Activated naive CD4-positive, alpha-beta T cell treated with anti-CD3 and anti-CD28 coated beads for 36 hours (primary cell): ENCODE measurements at regions of chr10 and their contacts with region 1.

Region 1: DNA sequence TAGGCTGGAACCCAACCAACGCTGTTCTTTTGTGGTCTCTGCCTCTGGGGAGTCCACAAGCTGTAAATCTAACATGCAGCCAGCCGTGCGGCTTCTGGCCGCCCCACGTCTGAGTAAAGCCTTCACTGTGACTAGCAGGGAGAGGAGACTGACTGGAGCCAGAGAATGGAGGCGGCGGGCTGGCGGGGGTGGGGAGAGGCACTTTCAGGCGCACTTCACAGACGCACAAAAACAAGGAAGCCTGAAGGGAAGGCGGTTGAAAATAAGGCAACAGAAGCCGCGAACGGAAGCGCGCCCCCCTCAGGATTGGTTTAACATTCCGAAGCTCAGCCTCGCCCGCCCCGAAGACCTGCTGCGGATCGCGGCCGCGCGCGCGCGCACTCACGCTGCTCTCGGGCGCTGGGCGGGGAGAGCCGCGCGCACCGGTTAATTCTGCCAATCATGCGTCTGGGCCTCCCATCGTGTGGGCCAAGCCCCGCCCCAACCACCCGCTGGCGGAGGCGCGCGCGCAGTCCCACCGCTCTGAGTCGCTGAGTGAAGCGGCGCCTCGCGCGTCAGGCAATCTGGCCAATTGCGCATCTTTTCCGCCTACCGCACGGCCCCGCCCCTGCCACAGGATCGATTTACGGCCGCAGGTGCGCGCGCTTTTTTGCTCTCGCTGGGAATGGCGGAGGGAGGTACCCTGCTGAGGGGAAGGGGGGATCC is at the start of gene SFR1:
- DNase-seq: peak; percentile 99
- H3K4me3 Mint-ChIP-seq: peak within 1 kb of the TSS; percentile 90
- H3K27ac Mint-ChIP-seq: peak within 1 kb of the TSS; percentile 97
- H3K4me1 Mint-ChIP-seq: peaks cover 38% of the 10 kb centered on the region
- H3K27me3 Mint-ChIP-seq: no peaks in the 10 kb centered on the region
- total RNA-seq, gene SFR1: 17.0 to 18.5 TPM

Region 2: DNA sequence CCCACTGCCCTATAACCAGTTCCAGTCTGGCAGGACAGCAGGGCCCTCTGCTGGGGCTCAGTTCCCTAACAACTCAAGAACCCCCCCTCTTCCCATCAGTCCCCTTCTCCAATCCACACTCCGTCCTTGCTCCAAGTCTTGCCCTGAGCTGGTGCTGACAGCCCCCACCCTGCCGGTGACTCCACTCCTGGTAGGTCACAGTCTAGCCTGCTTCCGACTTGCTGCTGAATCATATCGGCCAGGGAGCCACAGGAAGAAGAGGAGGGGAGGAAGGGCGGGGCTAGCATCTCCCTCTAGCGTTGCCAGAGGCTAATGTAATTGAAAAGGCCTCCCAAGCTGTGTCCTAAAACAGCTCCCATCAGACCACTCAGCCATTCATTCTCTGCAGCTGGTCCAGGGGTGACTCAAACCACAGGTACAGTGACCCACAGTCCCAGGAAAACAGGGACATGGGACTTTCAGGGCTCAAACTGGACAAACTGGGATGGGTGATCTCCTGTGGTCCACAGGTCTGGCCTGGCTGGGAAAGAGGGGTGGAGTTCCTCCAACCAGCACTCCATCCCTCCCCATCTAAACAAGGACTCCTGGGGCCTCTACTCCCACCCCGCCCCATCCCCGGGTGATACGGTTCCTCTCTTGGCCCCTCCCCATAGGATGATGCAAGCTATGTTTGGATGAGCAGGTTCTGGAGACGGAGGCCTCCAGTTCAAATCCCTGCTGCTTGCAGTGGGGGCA is 425.1 kb before region 1 on chr10:
- CTCF ChIA-PET with region 1: no interaction called
- intact Hi-C with region 1: loop called (anchors 5 kb)
- DNase-seq: peak; percentile 92
- H3K4me3 Mint-ChIP-seq: peak overlapping the region; percentile 28
- H3K27ac Mint-ChIP-seq: no peak overlapping the region
- H3K4me1 Mint-ChIP-seq: peaks cover 22% of the 10 kb centered on the region
- H3K27me3 Mint-ChIP-seq: no peaks in the 10 kb centered on the region

Region 3: DNA sequence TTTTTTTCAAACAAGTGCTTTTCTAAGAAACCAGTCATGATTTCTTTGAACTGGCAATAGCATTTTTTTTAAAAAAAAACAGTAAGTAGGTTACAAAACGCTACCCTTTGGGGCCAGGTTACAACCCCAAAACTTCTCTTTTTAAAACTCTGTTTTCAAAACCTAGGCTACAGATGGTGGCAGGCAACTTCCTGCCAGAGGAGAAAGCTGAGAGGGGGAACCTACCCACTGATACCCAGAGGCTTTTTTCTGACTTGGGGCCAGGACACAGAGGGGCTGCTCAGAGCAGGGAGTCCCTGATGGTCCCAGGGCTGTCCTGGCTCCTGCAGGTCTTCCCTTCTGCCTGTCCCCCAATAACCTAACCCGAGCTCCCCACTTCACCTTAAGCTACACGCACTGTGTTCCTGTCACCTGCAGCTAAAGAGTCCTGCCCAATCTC is 210.6 kb before region 1 on chr10:
- CTCF ChIA-PET with region 1: interaction called, 3 read pairs
- intact Hi-C with region 1: loop called (anchors 2 kb)
- DNase-seq: peak; percentile 57
- H3K4me3 Mint-ChIP-seq: peak overlapping the region; percentile 60
- H3K27ac Mint-ChIP-seq: peak overlapping the region; percentile 94
- H3K4me1 Mint-ChIP-seq: peaks cover 72% of the 10 kb centered on the region
- H3K27me3 Mint-ChIP-seq: no peaks in the 10 kb centered on the region

Region 4: DNA sequence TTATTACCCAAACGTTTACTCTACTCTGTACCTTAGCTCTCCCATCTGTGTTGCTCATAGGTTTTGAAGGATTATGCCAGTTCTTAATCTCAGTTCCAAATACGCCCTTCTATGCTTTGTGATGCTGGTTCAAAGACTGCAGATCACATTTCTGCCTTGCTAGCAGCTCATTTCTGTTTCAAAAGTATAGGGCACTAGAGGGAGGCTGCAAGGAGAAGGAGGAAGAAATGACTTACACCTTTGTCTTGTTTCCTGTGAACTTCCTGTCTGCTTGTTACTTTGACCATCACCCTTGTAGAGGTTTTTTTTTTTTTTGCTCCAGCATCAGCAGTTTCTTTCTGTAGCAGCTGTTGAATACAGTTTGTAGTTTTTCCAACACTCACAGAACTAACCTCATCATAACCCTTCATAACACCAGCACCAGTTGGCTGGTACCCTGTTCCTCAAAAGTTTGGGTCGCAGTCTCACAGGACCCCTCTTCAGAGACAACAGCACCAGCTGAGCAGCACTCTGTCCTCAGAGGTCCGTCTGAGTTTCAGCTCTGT is 138.2 kb before region 1 on chr10:
- CTCF ChIA-PET with region 1: interaction called, 6 read pairs
- intact Hi-C with region 1: loop called (anchors 1 kb)
- DNase-seq: peak; percentile 26
- H3K4me3 Mint-ChIP-seq: peak overlapping the region; percentile 7
- H3K27ac Mint-ChIP-seq: peak overlapping the region; percentile 72
- H3K4me1 Mint-ChIP-seq: peaks cover 59% of the 10 kb centered on the region
- H3K27me3 Mint-ChIP-seq: no peaks in the 10 kb centered on the region

Region 5: DNA sequence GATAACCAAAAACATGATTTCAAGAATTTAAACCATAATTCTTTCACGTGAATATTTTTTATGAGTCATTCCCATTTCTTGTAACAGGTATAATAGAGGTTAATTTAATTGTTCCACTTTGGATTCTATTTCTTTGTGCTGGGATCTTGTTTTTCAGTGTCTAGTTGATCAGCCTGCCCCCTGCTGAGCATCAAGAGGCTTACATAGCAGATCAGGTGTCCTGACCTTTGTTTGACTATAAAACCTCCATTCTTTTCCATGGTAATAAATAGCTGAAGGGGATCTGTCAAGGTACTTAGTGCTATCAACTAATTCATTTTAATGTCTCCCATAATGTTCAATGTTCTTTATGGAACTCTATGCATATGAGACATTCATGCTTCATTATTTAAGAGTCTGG is 40.9 kb before region 1 on chr10:
- CTCF ChIA-PET with region 1: interaction called, 5 read pairs
- intact Hi-C with region 1: loop called (anchors 5 kb)
- DNase-seq: peak; percentile 19
- H3K4me3 Mint-ChIP-seq: no peak overlapping the region
- H3K27ac Mint-ChIP-seq: no peak overlapping the region
- H3K4me1 Mint-ChIP-seq: no peaks in the 10 kb centered on the region
- H3K27me3 Mint-ChIP-seq: no peaks in the 10 kb centered on the region

Region 6: GRCh38 chr10:104268716-104269645 is 147.3 kb after region 1 on chr10 and contains the start of gene GSTO2:
- CTCF ChIA-PET with region 1: interaction called, 10 read pairs
- intact Hi-C with region 1: loop called (anchors 1 kb)
- DNase-seq: peak; percentile 99
- H3K4me3 Mint-ChIP-seq: peak within 1 kb of the TSS; percentile 84
- H3K27ac Mint-ChIP-seq: peak within 1 kb of the TSS; percentile 99
- H3K4me1 Mint-ChIP-seq: peaks cover 40% of the 10 kb centered on the region
- H3K27me3 Mint-ChIP-seq: no peaks in the 10 kb centered on the region
- total RNA-seq, gene GSTO2: 3.0 to 3.6 TPM

Region 7: DNA sequence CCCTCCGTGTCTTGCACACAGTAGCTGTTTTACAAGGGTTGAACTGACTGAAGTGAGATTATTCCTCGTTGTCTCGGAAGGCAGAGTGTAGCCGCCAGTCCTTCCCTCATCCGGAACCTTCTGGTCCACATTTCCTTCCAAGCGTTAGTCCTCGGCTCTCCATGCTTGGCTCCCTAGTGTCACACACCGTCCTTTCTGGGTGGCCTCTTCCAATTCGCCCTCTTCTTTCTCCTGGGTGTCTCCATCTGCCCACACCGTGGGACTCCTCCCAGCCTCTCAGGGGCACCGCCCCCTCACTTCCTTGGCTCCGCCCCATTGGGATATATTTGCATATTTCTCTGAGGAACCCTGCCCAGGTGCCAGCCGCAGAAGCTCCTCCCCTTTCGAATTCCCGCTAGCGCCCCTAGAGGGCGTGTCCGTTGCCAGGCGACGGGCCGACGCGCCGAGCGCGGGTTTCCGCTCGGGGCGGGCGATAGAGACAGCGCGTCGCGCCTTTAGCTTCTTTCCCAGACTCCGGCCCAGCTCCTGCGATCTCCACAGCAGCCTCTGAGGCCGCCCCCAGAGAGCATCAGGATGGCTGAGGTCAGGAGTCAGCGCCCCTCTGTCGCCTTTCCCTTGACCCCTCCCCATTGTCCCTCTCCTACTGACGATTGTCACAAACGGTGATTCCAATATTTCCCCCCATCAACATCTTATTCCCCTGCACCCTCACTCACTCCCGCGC is 231.8 kb after region 1 on chr10 and contains the start of gene CFAP58:
- CTCF ChIA-PET with region 1: interaction called, 3 read pairs
- intact Hi-C with region 1: loop called (anchors 2 kb)
- DNase-seq: peak; percentile 94
- H3K4me3 Mint-ChIP-seq: peak within 1 kb of the TSS; percentile 5
- H3K27ac Mint-ChIP-seq: peak within 1 kb of the TSS; percentile 8
- H3K4me1 Mint-ChIP-seq: no peaks in the 10 kb centered on the region
- H3K27me3 Mint-ChIP-seq: no peaks in the 10 kb centered on the region
- total RNA-seq, gene CFAP58: 0.59 to 0.86 TPM

Region 8: DNA sequence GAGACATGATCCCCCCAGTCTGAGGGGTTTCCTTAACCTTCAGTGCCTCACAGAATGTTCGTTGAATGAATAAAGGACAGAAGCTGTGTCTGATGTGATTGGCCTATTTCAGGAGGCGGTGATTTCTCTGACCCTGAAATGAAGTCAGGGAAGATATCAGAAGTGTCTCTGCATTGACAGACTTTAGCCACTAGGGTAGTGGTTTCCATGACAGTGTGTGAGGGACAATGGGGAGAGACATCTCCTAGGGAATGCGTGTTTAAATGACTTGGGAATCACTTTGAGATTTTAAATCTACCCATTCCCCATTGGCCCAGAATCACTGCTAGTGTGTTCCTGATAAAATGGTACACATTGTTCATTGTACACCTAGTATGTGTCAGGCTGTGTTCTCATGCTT is 364.0 kb after region 1 on chr10:
- CTCF ChIA-PET with region 1: no interaction called
- intact Hi-C with region 1: no loop called
- DNase-seq: no peak
- H3K4me3 Mint-ChIP-seq: no peak overlapping the region
- H3K27ac Mint-ChIP-seq: no peak overlapping the region
- H3K4me1 Mint-ChIP-seq: no peaks in the 10 kb centered on the region
- H3K27me3 Mint-ChIP-seq: peaks cover 3% of the 10 kb centered on the region